ENCODE measurements at regions of chr2 and their contacts with region 1.

Region 1: GRCh38 chr2:65278531-65278981 is 50.9 kb downstream of the ACTR2 start:
- DNase-seq: no peak
- H3K4me3 ChIP-seq: no peak overlapping the region
- H3K27ac ChIP-seq: no peak overlapping the region
- H3K27me3 ChIP-seq: no peaks in the 10 kb centered on the region
- CTCF ChIP-seq: no peak

Region 2: DNA sequence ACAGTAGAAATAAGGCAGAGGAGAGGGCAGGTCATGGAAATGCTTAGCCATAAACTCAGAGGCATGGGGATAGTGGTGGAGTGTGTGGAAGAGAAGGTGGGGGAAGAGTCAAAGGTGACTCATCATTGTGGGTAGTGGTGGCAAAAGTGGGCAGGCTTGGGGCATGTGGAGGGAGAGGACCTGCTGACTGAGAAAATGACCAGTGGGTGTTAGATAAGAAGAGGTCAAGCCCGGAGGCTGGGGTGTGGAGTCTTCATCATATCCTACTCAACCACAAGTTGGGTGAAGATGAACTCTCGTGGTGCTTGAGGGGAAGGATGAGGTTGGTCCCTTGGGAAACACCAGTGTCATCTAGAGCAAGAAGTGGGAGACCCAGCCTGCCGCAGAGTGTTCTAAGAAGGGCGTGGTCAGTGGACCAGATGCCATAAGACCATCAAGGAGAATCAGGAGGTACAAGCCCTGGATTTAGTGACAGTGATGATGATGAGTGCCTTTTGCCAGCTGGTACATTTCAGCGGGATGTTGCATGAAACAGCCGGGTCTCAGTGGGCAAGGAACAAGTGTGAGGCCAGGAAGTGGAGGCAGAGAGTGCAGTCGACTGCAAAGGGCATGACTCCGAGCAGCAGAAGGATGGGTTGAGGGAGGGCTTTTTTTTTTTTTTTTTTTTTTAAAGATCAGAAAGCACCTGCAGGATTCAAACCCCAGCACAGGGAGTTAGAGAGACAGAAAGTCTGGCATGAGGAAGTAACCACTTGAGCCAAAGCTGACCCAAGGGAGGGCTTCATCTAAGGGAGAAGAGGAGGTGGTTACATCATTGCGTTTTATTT is 276.4 kb after region 1 on chr2:
- CTCF ChIA-PET with region 1: interaction called, 10 read pairs
- POLR2A ChIA-PET with region 1: no interaction called
- DNase-seq: no peak
- H3K4me3 ChIP-seq: no peak overlapping the region
- H3K27ac ChIP-seq: no peak overlapping the region
- H3K27me3 ChIP-seq: no peaks in the 10 kb centered on the region
- CTCF ChIP-seq: no peak

Region 3: DNA sequence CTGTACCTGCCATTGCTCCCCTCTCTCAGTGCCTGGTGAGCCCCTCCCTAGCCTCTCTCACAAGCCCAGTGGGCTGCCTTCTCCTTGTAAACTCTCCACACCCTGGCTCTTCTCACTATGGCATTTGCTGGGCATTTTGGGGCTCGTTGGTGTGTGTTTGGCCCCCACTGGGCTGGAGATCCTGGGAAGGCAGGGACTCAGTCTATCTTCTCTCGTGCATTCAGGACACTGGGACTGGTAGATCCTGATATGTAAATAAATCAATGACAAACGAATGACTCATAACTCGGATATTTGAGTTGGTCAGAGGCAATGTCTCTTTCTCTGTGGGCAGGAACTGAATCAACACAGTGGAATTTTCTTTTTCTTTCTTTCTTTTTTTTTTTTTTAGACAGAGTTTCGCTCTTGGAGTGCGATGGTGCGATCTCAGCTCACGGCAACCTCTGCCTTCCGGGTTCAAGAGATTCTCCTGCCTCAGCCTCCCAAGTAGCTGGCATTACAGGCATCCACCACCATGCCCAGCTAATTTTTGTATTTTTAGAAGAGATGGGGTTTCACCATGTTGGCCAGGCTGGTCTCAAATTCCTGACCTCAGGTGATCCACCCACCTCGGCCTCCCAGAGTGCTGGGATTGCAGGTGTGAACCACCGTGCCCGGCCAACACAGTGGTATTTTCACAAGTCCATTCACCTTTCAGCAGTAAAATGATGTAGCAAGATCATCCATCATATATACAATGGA is 298.5 kb after region 1 on chr2:
- CTCF ChIA-PET with region 1: interaction called, 11 read pairs
- POLR2A ChIA-PET with region 1: no interaction called
- DNase-seq: peak; percentile 83
- H3K4me3 ChIP-seq: peak overlapping the region; percentile 13; the same call in 1 of the 2 replicates
- H3K27ac ChIP-seq: peak overlapping the region; percentile 90
- H3K27me3 ChIP-seq: no peaks in the 10 kb centered on the region
- CTCF ChIP-seq: no peak

Measured in AG04450 (cell line).